Heart right ventricle (tissue), 16 donors: ENCODE measurements at regions of chr5 and their contacts with region 1.

Region 1: GRCh38 chr5:149268928-149269557 is 2.6 kb upstream of the AFAP1L1 start:
- DNase-seq: no peak
- ATAC-seq: no peak
- H3K4me3 ChIP-seq: no peak overlapping the region
- H3K27ac ChIP-seq: peak overlapping the region in 4 of 10 donors; percentile 2 to 97 (median 36)
- H3K4me1 ChIP-seq: peaks cover 0 to 62% (median 23%) of the 10 kb centered on the region in 9 donors
- H3K27me3 ChIP-seq: peaks cover 0 to 39% (median 0%) of the 10 kb centered on the region in 7 donors
- CTCF ChIP-seq: peak; percentile 65 to 83 (median 77)

Region 2: GRCh38 chr5:148776780-148777179 is 492.3 kb before region 1 on chr5:
- intact Hi-C with region 1: no loop called
- DNase-seq: no peak
- ATAC-seq: peak in 1 of 8 donors; percentile 48
- H3K4me3 ChIP-seq: no peak overlapping the region
- H3K27ac ChIP-seq: no peak overlapping the region
- H3K4me1 ChIP-seq: no peaks in the 10 kb centered on the region
- H3K27me3 ChIP-seq: no peaks in the 10 kb centered on the region
- CTCF ChIP-seq: no peak

Region 3: DNA sequence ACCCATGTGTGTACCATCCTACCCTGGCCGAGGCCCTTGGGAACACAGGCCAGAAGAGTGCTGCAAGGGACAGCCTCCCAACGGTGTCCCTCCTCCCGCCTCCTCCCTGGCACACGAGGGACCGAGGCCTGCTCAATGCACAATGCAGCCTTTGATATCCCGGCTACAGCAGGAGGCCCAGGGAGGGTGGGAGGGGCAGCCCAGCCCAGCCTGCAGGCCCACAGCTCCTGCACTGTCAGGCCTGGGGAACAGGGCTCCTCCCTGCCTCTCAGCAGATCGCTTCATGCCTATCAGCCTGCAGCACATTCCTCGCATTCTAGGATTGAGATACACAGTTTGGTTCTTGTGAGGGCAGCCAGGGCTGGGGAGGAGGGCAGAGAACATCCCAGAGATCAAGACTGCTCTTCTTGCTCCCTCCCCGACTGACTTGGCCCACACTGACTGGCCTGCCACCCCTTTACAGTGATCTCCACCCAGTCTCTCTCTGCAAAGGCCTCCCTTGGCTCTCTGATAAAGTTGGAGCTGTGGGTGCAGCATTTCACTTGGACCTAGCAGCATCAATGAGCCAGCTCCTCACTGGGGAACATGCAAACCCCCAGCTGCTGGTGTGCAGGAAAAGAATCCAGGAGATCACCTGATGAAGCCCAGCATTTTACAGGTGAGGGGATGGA is 205.9 kb before region 1 on chr5 and contains the start of gene SH3TC2:
- intact Hi-C with region 1: no loop called
- DNase-seq: peak; percentile 66 to 74
- ATAC-seq: peak; percentile 71 to 92 (median 87)
- H3K4me3 ChIP-seq: peak within 1 kb of the TSS in 5 of 10 donors; percentile 1 to 23 (median 7)
- H3K27ac ChIP-seq: peak within 1 kb of the TSS; percentile 6 to 94 (median 84)
- H3K4me1 ChIP-seq: peaks cover 8 to 64% (median 58%) of the 10 kb centered on the region in 9 donors
- H3K27me3 ChIP-seq: no peaks in the 10 kb centered on the region
- CTCF ChIP-seq: no peak
- total RNA-seq, gene SH3TC2: 0.97 to 13.1 (median 7.4) TPM

Region 4: GRCh38 chr5:149228618-149229297 is 40.3 kb before region 1 on chr5:
- intact Hi-C with region 1: no loop called
- DNase-seq: peak in 1 of 2 donors; percentile 77
- ATAC-seq: peak; percentile 85 to 95 (median 92)
- H3K4me3 ChIP-seq: no peak overlapping the region
- H3K27ac ChIP-seq: peak overlapping the region; percentile 42 to 79 (median 70)
- H3K4me1 ChIP-seq: peaks cover 10 to 45% (median 36%) of the 10 kb centered on the region in 9 donors
- H3K27me3 ChIP-seq: no peaks in the 10 kb centered on the region
- CTCF ChIP-seq: peak; percentile 69 to 92 (median 79)

Region 5: GRCh38 chr5:149310947-149311658 is 42.1 kb after region 1 on chr5:
- intact Hi-C with region 1: loop called in 3 of 10 experiments (anchors 5 kb)
- DNase-seq: peak; percentile 57 to 59
- ATAC-seq: peak in 7 of 8 donors; percentile 13 to 47 (median 31)
- H3K4me3 ChIP-seq: no peak overlapping the region
- H3K27ac ChIP-seq: peak overlapping the region in 8 of 10 donors; percentile 3 to 71 (median 42)
- H3K4me1 ChIP-seq: peaks cover 2 to 49% (median 19%) of the 10 kb centered on the region in 9 donors
- H3K27me3 ChIP-seq: no peaks in the 10 kb centered on the region
- CTCF ChIP-seq: no peak

Region 6: GRCh38 chr5:149345147-149345875 is 76.3 kb after region 1 on chr5 and contains the start of gene GRPEL2:
- intact Hi-C with region 1: loop called in 1 of 10 experiments (anchors 5 kb)
- DNase-seq: peak; percentile 96
- ATAC-seq: peak; percentile 96 to 98 (median 98)
- H3K4me3 ChIP-seq: peak within 1 kb of the TSS; percentile 61 to 95 (median 76)
- H3K27ac ChIP-seq: peak within 1 kb of the TSS; percentile 57 to 89 (median 85)
- H3K4me1 ChIP-seq: peaks cover 0 to 51% (median 35%) of the 10 kb centered on the region in 9 donors
- H3K27me3 ChIP-seq: no peaks in the 10 kb centered on the region
- CTCF ChIP-seq: peak in 1 of 9 donors; percentile 1
- total RNA-seq, gene GRPEL2: 8.1 to 13.4 (median 10.2) TPM

Region 7: DNA sequence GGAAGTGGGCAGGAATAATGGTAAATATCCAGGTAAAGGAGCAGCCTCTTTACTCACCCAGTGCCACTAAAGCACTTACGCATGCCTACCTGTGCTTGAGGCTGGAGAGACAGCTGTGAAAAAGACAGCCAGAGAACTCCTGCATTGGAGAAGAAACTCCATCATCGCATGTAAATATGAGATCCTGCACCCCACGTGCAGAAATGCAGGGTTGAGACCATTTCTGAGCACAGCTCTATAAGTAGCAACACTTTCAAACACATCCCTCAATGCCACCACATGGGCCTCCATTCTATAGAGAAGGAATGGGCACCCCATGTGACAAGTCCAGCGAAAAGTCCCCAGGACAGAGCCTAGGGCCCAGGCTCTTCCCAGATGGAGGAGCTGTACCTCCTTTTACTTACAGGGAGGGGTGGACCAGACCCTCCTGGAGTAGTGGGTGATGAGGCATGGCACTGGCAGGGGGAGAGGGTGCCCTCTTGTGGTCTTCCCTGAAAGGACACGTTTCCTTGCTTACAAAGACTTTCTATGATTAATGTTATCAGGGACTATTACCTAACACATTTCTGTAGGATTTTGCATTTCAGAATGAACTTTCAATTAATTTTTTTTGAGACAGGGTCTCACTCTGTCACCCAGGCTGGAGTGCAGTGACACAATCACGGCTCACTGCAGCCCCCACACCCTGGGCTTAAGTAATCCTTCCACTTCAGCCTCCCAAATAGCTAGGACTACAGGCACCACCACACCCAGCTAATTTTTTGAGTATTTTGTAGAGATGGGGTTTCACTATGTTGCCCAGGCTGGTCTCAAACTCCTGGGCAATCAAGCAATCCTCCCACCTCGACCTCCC is 165.3 kb after region 1 on chr5:
- intact Hi-C with region 1: loop called in 4 of 10 experiments (anchors 5 to 10 kb)
- DNase-seq: peak in 1 of 2 donors; percentile 69
- ATAC-seq: peak in 7 of 8 donors; percentile 8 to 51 (median 25)
- H3K4me3 ChIP-seq: no peak overlapping the region
- H3K27ac ChIP-seq: peak overlapping the region in 9 of 10 donors; percentile 8 to 97 (median 55)
- H3K4me1 ChIP-seq: peaks cover 15 to 59% (median 19%) of the 10 kb centered on the region in 9 donors
- H3K27me3 ChIP-seq: no peaks in the 10 kb centered on the region
- CTCF ChIP-seq: peak; percentile 84 to 92 (median 90)

Region 8: DNA sequence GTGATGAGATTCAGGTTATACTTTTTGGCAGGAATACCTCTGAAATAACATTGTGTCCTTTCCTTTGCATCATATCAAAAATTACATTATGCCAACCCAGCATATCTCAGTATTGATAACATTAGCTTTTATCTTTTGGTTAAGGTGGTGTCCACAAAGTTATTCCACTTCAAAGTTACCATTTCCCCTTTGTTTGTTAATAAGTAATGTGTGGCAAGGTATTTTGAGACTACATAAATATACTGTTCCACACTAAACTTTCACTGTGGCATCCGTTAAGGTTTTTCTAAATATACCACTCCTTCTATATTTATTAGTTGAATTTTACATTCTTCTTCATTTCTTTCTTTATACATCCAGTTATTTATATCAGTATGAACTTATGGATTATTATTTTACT is 298.2 kb after region 1 on chr5:
- intact Hi-C with region 1: loop called in 3 of 10 experiments (anchors 5 to 10 kb)
- DNase-seq: no peak
- ATAC-seq: no peak
- H3K4me3 ChIP-seq: no peak overlapping the region
- H3K27ac ChIP-seq: no peak overlapping the region
- H3K4me1 ChIP-seq: peaks cover 0 to 27% (median 22%) of the 10 kb centered on the region in 9 donors
- H3K27me3 ChIP-seq: no peaks in the 10 kb centered on the region
- CTCF ChIP-seq: no peak